Endothelial cell of umbilical vein (primary cell): ENCODE measurements at regions of chr19 and their contacts with region 1.

Region 1: DNA sequence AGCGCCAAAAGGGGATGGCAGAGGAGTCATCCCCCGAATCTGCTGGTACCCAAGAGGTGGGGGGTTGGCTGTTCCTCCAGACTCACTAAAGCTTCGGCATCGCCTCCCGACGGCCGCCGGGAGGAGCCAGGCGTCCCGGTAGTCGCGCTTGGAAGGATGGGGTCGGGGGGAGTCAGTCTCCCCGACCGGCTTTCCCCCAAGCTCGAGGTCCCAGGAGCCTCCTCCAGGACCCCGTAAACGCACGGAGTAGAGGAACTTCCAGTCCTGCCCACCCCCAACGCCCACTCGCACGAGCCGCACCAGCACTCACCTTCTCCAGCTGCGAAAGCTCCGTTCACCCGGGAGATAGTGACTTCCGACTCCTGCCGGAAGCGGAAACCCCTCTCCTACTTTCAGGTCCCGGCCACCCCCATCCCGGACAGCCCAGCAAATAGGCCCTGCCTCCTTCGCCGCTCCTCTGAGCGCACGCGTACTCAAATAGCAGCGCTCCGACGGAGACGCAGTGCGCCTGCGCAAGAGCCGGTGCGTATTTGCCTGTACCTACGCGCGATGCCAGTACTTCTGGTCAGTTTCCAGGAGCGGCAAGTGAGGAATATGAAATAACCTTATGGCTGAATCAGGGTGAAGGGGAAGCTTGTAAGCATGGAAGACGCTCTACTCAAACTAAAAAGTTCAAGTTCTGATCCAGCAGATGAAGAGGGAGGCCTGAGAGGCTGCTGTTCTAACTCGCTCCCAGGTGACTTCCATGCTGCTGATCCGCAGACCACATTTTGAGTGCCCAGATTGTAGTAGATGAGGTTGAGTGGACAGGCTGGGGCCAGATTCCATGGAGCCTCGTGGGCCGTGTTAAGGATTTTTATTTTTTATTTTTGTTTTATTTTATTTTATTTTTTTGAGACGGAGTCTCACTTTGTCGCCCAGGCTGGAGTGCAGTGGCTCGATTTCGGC is at the start of gene ELOF1:
- DNase-seq: peak; percentile 97
- H3K4me3 ChIP-seq: peak within 1 kb of the TSS; percentile 56 to 81 (median 58)
- H3K27ac ChIP-seq: peak within 1 kb of the TSS; percentile 14
- H3K4me1 ChIP-seq: peaks cover 9% of the 10 kb centered on the region
- H3K27me3 ChIP-seq: no peaks in the 10 kb centered on the region
- CTCF ChIP-seq: no peak
- POLR2A ChIP-seq: peak; percentile 88
- total RNA-seq, gene ELOF1: 39.4 and 49.9 TPM in 2 replicates

Region 2: GRCh38 chr19:11278670-11279069 is 280.5 kb before region 1 on chr19:
- CTCF ChIA-PET with region 1: no interaction called
- POLR2A ChIA-PET with region 1: no interaction called
- dilution Hi-C with region 1: no loop called
- intact Hi-C with region 1: no loop called
- DNase-seq: no peak
- H3K4me3 ChIP-seq: no peak overlapping the region
- H3K27ac ChIP-seq: no peak overlapping the region
- H3K4me1 ChIP-seq: peaks cover 7% of the 10 kb centered on the region
- H3K27me3 ChIP-seq: no peaks in the 10 kb centered on the region
- CTCF ChIP-seq: no peak
- POLR2A ChIP-seq: no peak

Region 3: DNA sequence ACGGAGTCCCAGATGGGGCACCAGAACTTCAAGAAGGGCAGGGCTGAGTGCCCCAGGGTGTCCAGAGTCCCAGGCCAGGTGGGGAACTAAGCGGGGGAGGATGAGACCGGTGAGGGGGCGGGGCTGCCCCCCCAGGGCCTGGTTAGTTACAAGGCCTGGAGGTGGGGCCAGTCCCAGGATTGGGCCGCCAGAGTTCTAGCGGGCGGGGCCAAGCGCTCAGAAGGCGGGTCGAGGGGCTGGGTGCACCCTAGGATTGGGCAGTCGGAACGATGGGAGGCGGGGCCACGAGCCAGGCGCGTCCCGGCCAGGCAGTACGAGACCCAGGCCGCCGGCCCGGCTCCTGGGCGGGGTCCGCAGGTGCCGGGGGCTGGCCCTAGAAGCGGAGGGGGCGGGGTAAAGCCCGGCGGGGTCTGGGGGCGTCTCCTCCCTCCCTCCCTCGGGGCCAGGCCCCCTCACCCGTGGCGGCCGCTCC is 54.1 kb before region 1 on chr19:
- CTCF ChIA-PET with region 1: interaction called, 4 read pairs
- POLR2A ChIA-PET with region 1: no interaction called
- dilution Hi-C with region 1: no loop called
- intact Hi-C with region 1: loop called (anchors 1 kb)
- DNase-seq: peak; percentile 98
- H3K4me3 ChIP-seq: peak overlapping the region; percentile 44 to 71 (median 71)
- H3K27ac ChIP-seq: peak overlapping the region; percentile 81
- H3K4me1 ChIP-seq: peaks cover 10% of the 10 kb centered on the region
- H3K27me3 ChIP-seq: no peaks in the 10 kb centered on the region
- CTCF ChIP-seq: no peak
- POLR2A ChIP-seq: no peak

Region 4: DNA sequence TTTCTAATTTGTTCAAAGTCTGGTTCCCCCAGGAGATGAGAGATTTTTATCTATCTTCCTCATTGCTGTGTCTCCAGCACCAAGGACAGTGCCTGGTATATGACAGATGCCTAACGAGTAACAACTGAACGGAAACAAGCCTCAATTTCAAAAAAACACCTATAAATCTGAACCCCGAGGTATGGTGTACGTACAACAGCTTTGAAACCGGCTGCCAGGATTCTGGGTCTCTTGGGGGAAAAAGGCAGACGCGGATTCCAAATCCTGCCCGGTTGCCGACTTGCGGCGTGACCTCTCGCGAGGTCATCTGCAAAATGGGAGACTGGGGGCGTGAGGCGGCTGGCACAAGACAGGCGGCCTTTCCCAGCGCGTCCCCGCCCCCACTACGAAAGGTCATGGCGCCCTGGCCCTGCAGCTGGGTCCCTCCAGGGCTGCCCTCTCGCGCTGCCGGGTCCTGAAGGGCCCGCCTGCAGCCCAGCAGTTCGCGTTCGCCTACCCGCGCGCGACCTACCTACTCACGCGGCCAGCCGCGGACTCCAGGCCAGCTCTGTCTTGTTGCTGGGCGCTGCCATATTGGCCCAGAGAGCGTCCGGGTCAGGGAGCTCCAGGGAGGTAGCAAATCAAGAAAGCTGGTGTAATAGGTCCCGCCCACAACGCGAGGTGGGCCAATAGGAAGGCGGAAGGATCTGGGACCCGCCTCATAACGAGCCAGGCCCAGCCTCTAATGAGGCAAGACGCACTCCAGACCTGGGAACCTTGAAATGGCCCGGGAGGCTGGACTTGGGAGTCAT is 30.4 kb before region 1 on chr19 and contains the start of gene ECSIT:
- CTCF ChIA-PET with region 1: interaction called, 3 read pairs
- POLR2A ChIA-PET with region 1: no interaction called
- dilution Hi-C with region 1: no loop called
- intact Hi-C with region 1: loop called (anchors 2 kb)
- DNase-seq: peak; percentile 99
- H3K4me3 ChIP-seq: peak within 1 kb of the TSS; percentile 52 to 98 (median 90)
- H3K27ac ChIP-seq: peak within 1 kb of the TSS; percentile 82
- H3K4me1 ChIP-seq: peaks cover 8% of the 10 kb centered on the region
- H3K27me3 ChIP-seq: no peaks in the 10 kb centered on the region
- CTCF ChIP-seq: no peak
- POLR2A ChIP-seq: no peak
- total RNA-seq, gene ECSIT: 32.4 and 36.7 TPM in 2 replicates

Region 5: GRCh38 chr19:11649941-11650340 is 90.8 kb after region 1 on chr19:
- CTCF ChIA-PET with region 1: no interaction called
- POLR2A ChIA-PET with region 1: no interaction called
- dilution Hi-C with region 1: no loop called
- intact Hi-C with region 1: no loop called
- DNase-seq: no peak
- H3K4me3 ChIP-seq: no peak overlapping the region
- H3K27ac ChIP-seq: no peak overlapping the region
- H3K4me1 ChIP-seq: no peaks in the 10 kb centered on the region
- H3K27me3 ChIP-seq: no peaks in the 10 kb centered on the region
- CTCF ChIP-seq: no peak
- POLR2A ChIP-seq: no peak

Region 6: GRCh38 chr19:11694533-11695439 is 135.6 kb after region 1 on chr19:
- CTCF ChIA-PET with region 1: interaction called, 6 read pairs
- POLR2A ChIA-PET with region 1: no interaction called
- dilution Hi-C with region 1: no loop called
- intact Hi-C with region 1: loop called (anchors 5 kb)
- DNase-seq: peak; percentile 93
- H3K4me3 ChIP-seq: peak overlapping the region; percentile 66 to 93 (median 76)
- H3K27ac ChIP-seq: peak overlapping the region; percentile 7
- H3K4me1 ChIP-seq: peaks cover 2% of the 10 kb centered on the region
- H3K27me3 ChIP-seq: no peaks in the 10 kb centered on the region
- CTCF ChIP-seq: no peak
- POLR2A ChIP-seq: no peak